Mammary epithelial cell (primary cell): ENCODE measurements at regions of chr5 and their contacts with region 1.

Region 1: DNA sequence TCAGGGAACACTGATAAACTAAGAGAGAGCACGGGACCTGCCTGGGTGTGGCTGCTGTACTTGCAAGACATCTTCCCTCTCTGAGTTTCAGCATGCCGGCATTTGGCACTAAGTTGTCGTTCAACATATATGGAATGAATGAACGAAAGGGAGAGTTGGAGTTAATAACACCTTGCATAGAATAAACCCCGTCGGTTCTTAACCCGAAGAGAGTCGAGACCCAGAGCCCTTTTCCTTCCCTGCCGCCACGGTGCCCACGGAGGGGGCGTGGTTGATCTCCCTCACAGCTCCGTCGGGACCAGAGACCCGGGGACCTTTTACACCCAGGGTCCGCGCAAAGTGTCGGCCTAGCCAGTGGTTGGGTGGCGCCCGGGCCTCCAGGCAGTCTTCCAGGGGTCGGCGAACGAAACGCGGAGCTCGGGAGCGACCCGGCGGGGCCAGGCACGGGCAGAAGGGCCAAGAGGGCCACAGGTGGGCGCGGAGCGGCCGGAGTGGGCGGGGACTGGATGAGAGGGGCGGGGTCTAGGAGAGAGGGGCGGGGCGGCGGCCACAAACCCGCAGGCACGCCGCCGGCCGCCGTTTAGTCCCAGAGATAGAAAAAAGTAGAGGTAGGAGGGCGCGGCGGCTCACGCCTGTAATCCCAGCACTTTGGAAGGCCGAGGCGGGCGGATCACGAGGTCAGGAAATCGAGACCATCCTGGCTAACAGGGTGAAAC is 735 bp upstream of the RPL26L1 start:
- DNase-seq: peak; percentile 37
- H3K4me3 ChIP-seq: peak overlapping the region; percentile 75 to 100 (median 98)
- H3K27ac ChIP-seq: peak overlapping the region; percentile 86
- H3K4me1 ChIP-seq: peaks cover 22% of the 10 kb centered on the region
- H3K27me3 ChIP-seq: no peaks in the 10 kb centered on the region
- CTCF ChIP-seq: no peak

Region 2: DNA sequence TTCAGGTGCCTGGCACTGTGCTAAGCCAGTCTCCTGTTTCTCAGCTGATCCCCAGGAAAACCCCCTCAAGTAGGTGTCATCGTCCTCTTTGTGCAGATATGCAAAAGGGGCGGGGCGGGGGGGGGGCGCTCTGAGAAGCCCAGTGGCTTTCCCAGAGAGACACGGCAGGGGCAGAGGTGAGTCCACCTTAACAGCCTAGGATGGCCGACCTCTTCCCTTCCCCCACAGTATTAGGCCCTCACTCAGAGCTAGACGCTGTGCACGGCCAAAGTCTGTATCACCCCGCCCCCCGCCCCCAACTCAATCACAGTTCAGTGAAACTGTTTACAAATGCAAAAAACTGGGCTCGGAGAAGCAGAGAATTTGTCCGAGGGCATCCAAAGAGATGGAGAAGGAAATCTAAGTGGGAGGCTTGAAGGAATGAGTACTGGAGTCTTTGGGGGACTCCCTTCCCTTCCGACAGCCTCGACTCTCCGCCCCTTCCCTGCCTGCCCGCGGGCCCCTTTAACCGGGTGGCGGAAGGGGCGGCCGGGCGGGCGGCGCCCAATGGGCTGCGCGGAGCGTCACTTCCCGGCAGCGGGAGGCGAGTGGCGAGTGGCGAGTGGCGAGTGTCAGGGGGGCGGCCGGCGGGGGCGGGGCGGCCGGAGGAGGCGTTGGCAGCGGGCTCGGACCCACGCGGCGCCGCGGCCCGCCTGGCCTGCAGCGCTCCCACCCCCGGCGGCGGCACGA is 124.6 kb before region 1 on chr5 and contains the start of gene ERGIC1:
- CTCF ChIA-PET with region 1: no interaction called
- dilution Hi-C with region 1: no loop called
- in situ Hi-C with region 1: no loop called
- intact Hi-C with region 1: no loop called
- DNase-seq: peak; percentile 78
- H3K4me3 ChIP-seq: peak within 1 kb of the TSS; percentile 73 to 87 (median 82)
- H3K27ac ChIP-seq: peak within 1 kb of the TSS; percentile 72
- H3K4me1 ChIP-seq: peaks cover 8% of the 10 kb centered on the region
- H3K27me3 ChIP-seq: no peaks in the 10 kb centered on the region
- CTCF ChIP-seq: no peak
- total RNA-seq, gene ERGIC1: 58.8 to 98.6 TPM

Region 3: DNA sequence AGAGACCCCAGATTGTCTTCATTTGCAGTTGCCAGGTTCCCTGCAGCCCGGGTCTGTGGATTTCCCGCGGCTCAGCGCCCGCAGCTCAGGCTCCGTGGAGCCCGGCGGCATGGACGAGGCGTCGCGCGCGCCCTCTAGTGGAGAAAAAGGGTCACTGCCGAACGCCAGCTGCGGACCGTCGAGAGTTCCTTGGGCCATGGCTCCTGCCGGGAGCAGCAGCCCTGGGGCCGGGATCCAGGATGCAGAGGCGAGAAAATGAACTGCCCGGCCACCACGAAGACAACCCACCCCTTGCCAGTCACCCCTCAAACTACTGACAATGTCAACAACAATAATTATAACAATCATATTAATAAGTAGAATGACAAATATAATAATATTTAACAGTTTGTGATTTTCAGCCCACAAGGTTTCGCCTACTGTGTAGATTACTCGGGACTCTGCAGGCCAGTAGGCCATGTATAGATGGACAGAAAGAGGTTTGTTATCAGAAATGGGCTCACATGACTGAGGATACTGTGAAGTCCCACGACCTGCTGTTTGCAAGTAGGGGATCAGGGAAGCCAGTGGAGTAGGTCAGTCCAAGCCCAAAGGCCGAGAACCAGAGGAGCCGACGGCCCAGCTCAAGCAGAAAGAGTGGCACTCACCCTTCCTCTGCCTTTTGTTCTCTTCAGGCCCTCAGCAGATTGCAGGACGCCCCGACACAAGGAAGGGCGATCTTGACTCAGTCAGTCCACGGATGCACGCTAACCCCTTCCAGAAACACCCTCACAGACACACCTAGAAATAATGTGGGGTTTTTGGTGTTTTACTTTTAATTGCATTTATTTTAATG is 614.9 kb after region 1 on chr5:
- CTCF ChIA-PET with region 1: no interaction called
- dilution Hi-C with region 1: no loop called
- in situ Hi-C with region 1: loop called in 1 of 2 experiments (anchors 25 kb)
- intact Hi-C with region 1: no loop called
- DNase-seq: peak; percentile 37
- H3K4me3 ChIP-seq: peak overlapping the region in 1 of 3 experiments; percentile 16
- H3K27ac ChIP-seq: no peak overlapping the region
- H3K4me1 ChIP-seq: peaks cover 15% of the 10 kb centered on the region
- H3K27me3 ChIP-seq: no peaks in the 10 kb centered on the region
- CTCF ChIP-seq: peak; percentile 80 to 96